AG04449 (cell line): ENCODE measurements at regions of chr1 and their contacts with region 1.

Region 1: GRCh38 chr1:185595835-185596667 is 138.1 kb upstream of the HMCN1 start:
- DNase-seq: no peak
- H3K4me3 ChIP-seq: no peak overlapping the region
- CTCF ChIP-seq: peak; percentile 61

Region 2: DNA sequence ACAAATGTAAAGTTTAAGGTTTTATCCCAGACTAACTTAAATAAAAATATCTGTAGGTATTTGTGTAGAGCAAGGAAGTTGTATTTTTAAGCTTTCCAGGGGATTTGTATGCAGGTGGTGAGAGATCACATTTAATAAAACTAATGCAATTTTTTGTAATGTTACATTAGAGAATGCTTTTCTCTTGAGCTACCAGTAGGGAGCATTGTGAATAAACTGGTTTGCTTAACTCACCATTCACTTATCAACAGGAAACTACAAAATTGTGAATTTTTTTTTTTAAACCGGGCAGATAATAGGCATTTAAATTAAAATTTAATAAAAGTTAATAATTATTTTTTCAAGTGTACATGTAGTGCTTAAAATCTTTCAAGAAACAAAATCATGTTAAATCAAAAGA is 357.6 kb before region 1 on chr1:
- CTCF ChIA-PET with region 1: interaction called, 14 read pairs
- POLR2A ChIA-PET with region 1: no interaction called
- DNase-seq: no peak
- H3K4me3 ChIP-seq: no peak overlapping the region
- CTCF ChIP-seq: peak; percentile 26

Region 3: DNA sequence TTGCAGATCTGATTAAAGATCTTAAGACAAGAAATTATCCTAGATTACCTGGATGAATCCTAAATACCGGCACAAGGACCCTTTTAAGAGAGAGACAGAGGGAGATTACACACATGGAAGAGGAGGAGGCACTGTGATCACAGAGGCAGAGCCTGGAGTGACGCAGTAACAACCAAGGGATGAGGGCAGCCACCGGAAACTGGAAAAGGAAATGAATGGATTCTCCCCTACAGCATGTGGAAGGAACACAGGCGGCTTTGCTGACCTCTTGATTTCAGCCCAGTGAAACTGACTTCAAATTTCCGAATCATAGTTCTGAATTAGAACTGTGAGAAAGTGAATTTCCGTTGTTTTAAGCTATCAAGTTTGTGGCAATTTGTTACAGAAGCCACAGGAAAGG is 228.8 kb before region 1 on chr1:
- CTCF ChIA-PET with region 1: no interaction called
- POLR2A ChIA-PET with region 1: no interaction called
- DNase-seq: no peak
- H3K4me3 ChIP-seq: no peak overlapping the region
- CTCF ChIP-seq: no peak

Region 4: DNA sequence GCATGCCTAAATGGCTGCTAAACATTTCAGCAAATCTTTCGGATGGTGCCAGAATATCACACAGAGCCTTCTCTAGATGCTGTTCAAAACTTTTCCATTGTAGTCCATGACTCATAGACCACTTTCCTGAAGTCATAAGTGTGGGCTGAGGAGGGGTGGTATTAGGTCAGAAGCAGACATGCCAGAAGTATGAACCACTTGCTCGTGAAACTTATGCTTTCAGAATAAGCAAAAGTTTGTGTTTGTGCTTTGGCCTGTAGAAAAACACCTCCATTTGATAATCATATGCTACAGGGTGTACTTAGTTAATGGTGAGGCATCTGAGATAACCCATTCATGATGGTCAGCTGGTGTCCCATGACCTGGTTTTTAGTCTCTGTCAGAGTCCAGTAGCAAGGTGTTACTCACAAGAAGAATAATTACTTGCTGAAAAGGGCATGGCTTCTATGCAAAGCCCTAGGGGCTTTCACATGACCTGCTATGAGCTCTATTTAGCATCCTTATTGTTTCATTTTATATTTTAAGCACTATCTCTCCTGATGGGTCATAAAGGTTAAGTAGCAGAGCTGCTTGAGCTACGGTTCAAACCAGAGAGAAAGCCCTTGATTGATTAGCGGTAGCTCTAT is 95.9 kb before region 1 on chr1:
- CTCF ChIA-PET with region 1: no interaction called
- POLR2A ChIA-PET with region 1: no interaction called
- DNase-seq: peak; percentile 82
- H3K4me3 ChIP-seq: no peak overlapping the region
- CTCF ChIP-seq: no peak

Region 5: DNA sequence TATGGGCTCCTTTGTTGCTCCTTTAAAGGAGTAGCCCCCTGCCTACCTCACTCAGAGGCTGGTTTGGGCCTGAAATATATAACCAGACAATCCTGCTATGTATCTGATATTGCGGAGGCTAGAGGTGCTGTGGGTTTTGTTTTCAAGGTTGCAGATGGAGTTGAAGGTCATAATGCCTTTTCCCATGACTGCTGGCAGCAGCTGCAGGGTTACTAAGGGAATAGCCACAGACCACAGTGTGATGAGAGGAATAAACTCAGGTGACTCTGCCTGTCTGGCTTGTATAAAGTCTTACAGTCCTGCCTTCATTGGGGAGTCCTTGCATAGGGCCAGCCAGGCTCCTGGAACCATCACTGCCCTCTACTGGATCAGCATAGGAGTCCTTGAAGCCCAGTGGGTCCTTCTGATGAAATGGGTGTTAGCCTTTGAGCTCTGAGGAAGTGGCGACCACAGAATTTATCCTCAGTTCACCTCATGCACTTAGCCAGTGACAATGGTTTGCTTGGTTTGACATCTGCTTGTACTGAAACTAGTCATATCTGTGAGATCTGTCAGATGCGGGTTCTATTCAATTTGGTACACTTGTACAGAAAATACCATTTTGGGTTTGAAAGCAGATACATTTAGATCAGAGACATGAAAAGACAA is 36.2 kb before region 1 on chr1:
- CTCF ChIA-PET with region 1: interaction called, 10 read pairs
- POLR2A ChIA-PET with region 1: no interaction called
- DNase-seq: no peak
- H3K4me3 ChIP-seq: no peak overlapping the region
- CTCF ChIP-seq: peak; percentile 58

Region 6: GRCh38 chr1:185573677-185574076 is 22.4 kb before region 1 on chr1:
- CTCF ChIA-PET with region 1: interaction called, 25 read pairs
- POLR2A ChIA-PET with region 1: no interaction called
- DNase-seq: no peak
- H3K4me3 ChIP-seq: no peak overlapping the region
- CTCF ChIP-seq: no peak

Region 7: DNA sequence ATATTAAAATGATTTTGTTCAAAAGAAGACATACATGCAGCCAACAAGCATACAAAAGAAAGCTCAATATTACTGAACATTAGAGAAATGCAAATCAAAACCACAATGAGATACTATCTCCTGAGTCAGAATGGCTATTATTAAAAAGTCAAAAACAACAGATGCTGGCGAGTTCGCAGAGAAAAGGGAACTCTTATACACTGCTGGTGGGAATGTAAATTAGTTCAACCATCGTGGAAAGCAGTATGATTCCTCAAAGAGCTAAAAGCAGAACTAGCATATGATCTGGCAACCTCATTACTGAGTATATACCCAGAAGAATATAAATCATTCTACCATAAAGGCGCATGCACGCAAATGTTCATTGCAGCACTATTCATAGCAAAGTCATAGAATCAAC is 12.1 kb after region 1 on chr1:
- CTCF ChIA-PET with region 1: interaction called, 25 read pairs
- POLR2A ChIA-PET with region 1: no interaction called
- DNase-seq: no peak
- H3K4me3 ChIP-seq: no peak overlapping the region
- CTCF ChIP-seq: no peak

Region 8: DNA sequence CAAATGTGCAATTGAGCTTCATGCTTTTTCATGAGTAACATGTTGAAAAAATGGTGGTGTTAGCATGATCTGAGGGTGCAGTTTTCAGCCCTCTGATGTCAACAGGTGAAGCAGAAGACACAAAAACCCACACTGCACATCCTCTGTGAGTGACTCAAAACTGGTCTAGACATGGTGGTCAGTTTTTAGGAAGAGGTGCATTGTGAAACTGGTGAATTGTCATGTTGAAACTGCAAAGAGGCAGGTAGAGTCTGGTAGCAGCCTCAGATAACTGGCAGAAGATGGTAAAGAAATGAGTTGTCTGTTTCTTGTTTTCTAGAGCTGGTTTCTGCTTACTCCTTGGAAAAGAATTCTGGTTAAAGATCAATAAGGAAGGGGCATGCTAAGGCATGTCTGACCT is 40.8 kb after region 1 on chr1:
- CTCF ChIA-PET with region 1: interaction called, 10 read pairs
- POLR2A ChIA-PET with region 1: no interaction called
- DNase-seq: no peak
- H3K4me3 ChIP-seq: no peak overlapping the region
- CTCF ChIP-seq: no peak

Region 9: GRCh38 chr1:185720633-185721272 is 124.7 kb after region 1 on chr1:
- CTCF ChIA-PET with region 1: no interaction called
- POLR2A ChIA-PET with region 1: no interaction called
- DNase-seq: peak; percentile 36
- H3K4me3 ChIP-seq: no peak overlapping the region
- CTCF ChIP-seq: peak; percentile 32